Motor neuron (in vitro differentiated cells): ENCODE measurements at regions of chr2 and their contacts with region 1.

Region 1: GRCh38 chr2:79219383-79219988 is 59.9 kb upstream of the REG3A start:
- ATAC-seq: peak in 3 of 8 experiments; percentile 38 to 46 (median 38)
- H3K4me3 ChIP-seq: no peak overlapping the region
- H3K27ac ChIP-seq: no peak overlapping the region
- H3K4me1 ChIP-seq: no peaks in the 10 kb centered on the region

Region 2: GRCh38 chr2:78634425-78634824 is 585.1 kb before region 1 on chr2:
- in situ Hi-C with region 1: no loop called
- ATAC-seq: peak in 3 of 8 experiments; percentile 44 to 68 (median 59)
- H3K4me3 ChIP-seq: no peak overlapping the region
- H3K27ac ChIP-seq: no peak overlapping the region
- H3K4me1 ChIP-seq: peaks cover 0 to 5% of the 10 kb centered on the region in 2 donors

Region 3: DNA sequence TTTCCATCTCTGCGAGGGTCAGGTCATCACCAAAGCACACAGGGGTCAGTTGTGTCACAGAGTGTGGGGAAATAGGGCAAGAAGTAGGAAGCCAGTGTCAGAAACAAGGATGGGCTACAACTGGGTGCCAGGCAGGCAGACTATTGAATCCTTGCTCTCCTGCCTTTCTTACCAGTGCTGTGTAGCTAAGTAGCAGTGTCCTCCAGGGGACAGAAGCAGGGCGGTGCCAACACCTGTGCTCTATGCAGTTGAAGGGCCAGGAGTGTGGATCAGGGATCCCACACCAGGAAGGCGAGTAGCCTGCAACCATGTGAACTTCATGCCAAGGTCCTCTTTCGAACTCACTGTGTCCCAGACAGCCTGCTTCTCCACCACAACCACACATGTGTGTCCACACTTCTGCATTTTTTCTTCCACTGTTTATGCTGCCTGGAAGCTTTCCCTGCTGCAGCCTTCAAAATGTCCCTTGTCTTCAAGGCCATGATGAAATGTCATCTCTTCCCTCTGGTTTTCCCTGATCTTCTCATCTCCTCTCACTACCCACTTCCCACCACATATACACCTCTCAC is 219.4 kb before region 1 on chr2:
- in situ Hi-C with region 1: loop called in 1 of 9 experiments (anchors 25 kb)
- ATAC-seq: no peak
- H3K4me3 ChIP-seq: no peak overlapping the region
- H3K27ac ChIP-seq: no peak overlapping the region
- H3K4me1 ChIP-seq: peaks cover 2 to 17% of the 10 kb centered on the region in 2 donors

Region 4: DNA sequence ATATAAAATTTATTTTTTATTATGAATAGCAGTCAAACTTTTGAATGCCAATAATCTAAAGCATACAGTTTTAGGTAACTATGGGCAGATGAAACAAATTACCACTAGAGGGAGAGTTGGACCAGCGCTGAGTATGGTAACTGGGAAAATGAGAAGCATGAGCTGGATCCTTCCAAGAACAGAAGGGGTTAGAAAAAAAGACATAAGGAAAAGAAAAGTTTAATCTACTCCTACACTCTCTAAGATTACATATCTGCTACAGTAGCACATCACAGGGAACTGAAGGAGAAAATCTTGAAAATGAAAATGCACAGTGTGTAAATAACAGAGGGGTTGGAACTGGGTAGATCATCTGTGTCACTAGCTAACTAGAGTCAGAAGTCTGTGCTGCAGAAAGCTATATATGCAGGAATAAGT is 178.4 kb before region 1 on chr2:
- in situ Hi-C with region 1: loop called in 1 of 9 experiments (anchors 25 kb)
- ATAC-seq: peak; percentile 45 to 78 (median 60)
- H3K4me3 ChIP-seq: no peak overlapping the region
- H3K27ac ChIP-seq: no peak overlapping the region
- H3K4me1 ChIP-seq: no peaks in the 10 kb centered on the region

Region 5: DNA sequence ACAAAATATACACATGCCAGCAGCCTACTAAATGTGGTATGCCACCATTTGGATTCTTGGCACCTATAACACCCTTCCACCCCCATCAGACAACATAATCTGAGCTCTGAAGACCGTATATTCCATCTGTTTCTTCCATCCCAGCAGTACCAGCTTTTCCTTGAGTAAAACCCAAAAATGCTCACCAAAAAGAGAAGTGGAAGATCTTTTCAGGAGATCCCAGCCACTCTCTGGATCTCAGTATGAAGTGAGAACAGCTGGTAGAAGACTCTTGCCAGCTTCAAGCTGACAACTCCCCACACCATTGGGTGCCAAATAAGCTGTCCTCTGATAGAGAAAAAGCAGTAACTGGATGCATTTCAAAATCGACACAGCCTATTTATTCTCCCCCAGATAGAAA is 154.3 kb before region 1 on chr2:
- in situ Hi-C with region 1: no loop called
- ATAC-seq: no peak
- H3K4me3 ChIP-seq: no peak overlapping the region
- H3K27ac ChIP-seq: no peak overlapping the region
- H3K4me1 ChIP-seq: no peaks in the 10 kb centered on the region

Region 6: GRCh38 chr2:79171348-79171958 is 48.0 kb before region 1 on chr2:
- in situ Hi-C with region 1: no loop called
- ATAC-seq: no peak
- H3K4me3 ChIP-seq: no peak overlapping the region
- H3K27ac ChIP-seq: no peak overlapping the region
- H3K4me1 ChIP-seq: no peaks in the 10 kb centered on the region

Region 7: GRCh38 chr2:79855264-79856006 is 635.9 kb after region 1 on chr2:
- in situ Hi-C with region 1: loop called in 3 of 9 experiments (anchors 10 to 25 kb)
- ATAC-seq: peak; percentile 49 to 76 (median 60)
- H3K4me3 ChIP-seq: no peak overlapping the region
- H3K27ac ChIP-seq: no peak overlapping the region
- H3K4me1 ChIP-seq: peaks cover 4 to 6% of the 10 kb centered on the region in 2 donors

Region 8: GRCh38 chr2:79860228-79861058 is 641.0 kb after region 1 on chr2:
- in situ Hi-C with region 1: loop called in 3 of 9 experiments (anchors 10 to 25 kb)
- ATAC-seq: peak; percentile 63 to 91 (median 84)
- H3K4me3 ChIP-seq: no peak overlapping the region
- H3K27ac ChIP-seq: no peak overlapping the region
- H3K4me1 ChIP-seq: peaks cover 9 to 13% of the 10 kb centered on the region in 2 donors

Region 9: DNA sequence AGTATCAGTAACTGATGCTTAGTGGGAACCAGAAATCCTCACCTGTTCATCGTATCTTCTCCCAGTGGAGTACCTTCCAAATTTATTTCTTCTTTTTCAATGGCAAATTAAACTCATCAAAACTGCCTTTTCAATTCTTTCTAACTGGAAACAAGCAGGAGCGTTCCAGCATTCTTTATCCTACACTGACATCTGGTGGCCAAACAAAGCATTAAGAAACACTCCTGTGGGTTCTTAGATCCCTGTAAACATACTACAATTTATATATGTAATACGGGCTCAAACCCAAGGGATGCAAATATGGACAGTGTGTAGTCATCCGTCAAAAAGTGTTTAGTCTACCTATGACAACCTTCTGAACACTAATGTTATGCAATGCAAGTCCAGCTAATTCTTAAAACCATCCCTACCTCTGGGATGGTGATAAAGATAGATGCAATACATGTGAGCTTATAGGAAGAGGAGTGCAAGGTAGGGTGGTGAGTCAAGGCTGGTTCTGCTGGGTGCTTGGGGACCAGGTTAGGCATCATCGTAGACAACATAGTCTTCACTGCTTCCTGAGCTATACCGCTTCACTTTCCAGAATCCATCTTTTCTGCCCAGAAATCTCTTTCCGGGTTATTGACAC is 668.4 kb after region 1 on chr2:
- in situ Hi-C with region 1: loop called in 1 of 9 experiments (anchors 25 kb)
- ATAC-seq: peak in 7 of 8 experiments; percentile 42 to 83 (median 68)
- H3K4me3 ChIP-seq: no peak overlapping the region
- H3K27ac ChIP-seq: no peak overlapping the region
- H3K4me1 ChIP-seq: no peaks in the 10 kb centered on the region